Testis (tissue), 5 donors: ENCODE measurements at regions of chr2 and their contacts with region 1.

Region 1: GRCh38 chr2:19362755-19363473 is 4.5 kb upstream of the OSR1 start:
- DNase-seq: peak; percentile 90
- H3K4me3 ChIP-seq: peak overlapping the region; percentile 38 to 65
- H3K27ac ChIP-seq: peak overlapping the region; percentile 16 to 73
- H3K4me1 ChIP-seq: peaks cover 19% of the 10 kb centered on the region
- H3K27me3 ChIP-seq: no peaks in the 10 kb centered on the region
- CTCF ChIP-seq: peak; percentile 77 to 89 (median 81)
- POLR2A ChIP-seq: no peak

Region 2: DNA sequence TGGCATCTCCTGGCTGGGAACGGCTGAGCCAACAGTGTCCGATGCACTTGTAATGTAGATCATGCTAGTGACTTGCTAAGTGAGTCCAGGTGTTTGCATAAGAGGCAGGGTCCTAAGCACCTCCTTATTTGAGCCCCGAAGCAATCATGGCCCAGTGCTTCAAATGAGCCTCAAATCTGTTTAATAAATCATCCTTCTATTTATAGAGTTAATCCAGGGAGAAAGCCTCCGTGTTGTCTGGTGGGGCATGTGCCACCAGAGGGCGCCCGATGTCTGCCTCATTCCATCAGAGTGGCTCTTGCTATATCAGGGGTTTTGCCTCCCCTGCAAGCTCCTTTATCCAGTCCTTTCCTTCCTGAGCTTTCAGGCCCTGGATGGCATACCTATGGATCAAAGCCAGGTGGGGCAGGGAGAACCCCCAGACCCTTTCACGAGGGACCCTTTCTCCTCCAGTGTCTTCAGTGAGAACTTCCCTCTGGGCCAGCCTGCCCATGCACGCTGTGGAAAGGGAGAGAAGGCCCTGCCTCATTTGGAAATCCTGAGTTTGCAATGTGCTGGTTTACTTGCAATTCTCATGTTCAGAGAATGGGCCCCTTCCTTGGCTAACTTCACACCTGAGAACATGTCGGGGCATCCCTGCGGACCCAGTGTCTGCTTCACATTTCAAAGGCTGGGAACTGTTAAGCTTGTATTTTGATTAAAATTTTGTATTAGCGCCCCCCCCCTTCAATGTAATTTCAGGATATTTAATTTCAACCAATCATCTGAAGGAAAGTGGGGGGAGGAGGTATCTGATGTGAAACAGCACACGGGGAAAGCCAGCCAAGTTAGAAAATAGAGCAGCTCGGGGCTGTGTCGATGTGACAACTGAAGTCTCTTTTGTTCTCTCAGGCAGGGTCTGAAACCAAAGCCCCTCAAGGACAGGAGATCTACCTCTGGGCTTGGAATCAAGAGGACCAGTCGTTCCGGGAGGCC is 842.2 kb before region 1 on chr2:
- intact Hi-C with region 1: loop called (anchors 10 kb)
- DNase-seq: peak; percentile 91
- H3K4me3 ChIP-seq: no peak overlapping the region
- H3K27ac ChIP-seq: no peak overlapping the region
- H3K4me1 ChIP-seq: peaks cover 8% of the 10 kb centered on the region
- H3K27me3 ChIP-seq: no peaks in the 10 kb centered on the region
- CTCF ChIP-seq: peak; percentile 84 to 91 (median 85)
- POLR2A ChIP-seq: no peak

Region 3: DNA sequence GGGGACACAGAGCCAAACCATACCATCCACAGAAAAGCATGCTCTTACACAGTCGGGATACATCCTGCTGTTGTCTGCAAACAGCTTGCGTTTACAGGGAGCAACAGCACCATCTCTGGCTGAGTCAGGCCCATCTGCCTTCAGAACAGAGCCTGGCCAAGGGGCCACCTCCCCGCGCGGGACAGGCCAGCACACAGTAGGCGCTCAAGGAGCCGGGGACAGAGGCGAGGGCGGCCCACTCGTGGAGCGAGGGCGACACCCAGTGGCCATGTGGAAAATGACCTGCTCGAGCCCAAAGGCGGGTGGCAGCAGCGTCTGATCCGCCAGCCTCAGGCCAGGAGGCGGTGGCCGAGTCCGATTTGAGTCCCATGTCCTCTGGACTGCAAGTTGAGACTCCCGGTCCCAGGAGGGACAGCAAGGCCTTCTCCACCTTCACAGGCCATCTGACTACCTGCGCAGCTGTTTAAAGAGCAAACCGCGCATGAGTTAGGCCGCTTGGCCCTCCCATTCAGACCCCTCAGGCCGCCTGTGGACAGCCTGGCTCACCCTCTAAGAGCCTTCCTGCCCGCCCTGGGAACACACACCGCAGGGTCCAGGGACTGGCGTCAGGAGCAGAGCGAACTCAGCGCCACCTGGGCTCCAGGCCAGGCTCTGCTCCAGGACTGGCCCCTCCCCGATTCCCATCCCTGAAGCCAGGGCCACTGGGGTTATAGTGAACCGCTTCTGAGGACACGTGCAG is 500.6 kb after region 1 on chr2:
- intact Hi-C with region 1: loop called (anchors 10 kb)
- DNase-seq: peak; percentile 83
- H3K4me3 ChIP-seq: peak overlapping the region in 1 of 2 donors; percentile 7
- H3K27ac ChIP-seq: no peak overlapping the region
- H3K4me1 ChIP-seq: peaks cover 6% of the 10 kb centered on the region
- H3K27me3 ChIP-seq: no peaks in the 10 kb centered on the region
- CTCF ChIP-seq: peak; percentile 75 to 93 (median 92)
- POLR2A ChIP-seq: no peak